Activated T-helper 1 cell treated with anti-CD3 and anti-CD28 coated beads, Interleukin-12 subunit alpha, Interleukin-12 subunit beta, Interleukin-2, Interleukin-4 antibody, amounts not matched to agents 30 ng/mL and 10 ng/mL and 1 ng/mL, durations not matched to agents 14 hours and 24 hours and 36 hours (primary cell): ENCODE measurements at regions of chr16 and their contacts with region 1.

Region 1: DNA sequence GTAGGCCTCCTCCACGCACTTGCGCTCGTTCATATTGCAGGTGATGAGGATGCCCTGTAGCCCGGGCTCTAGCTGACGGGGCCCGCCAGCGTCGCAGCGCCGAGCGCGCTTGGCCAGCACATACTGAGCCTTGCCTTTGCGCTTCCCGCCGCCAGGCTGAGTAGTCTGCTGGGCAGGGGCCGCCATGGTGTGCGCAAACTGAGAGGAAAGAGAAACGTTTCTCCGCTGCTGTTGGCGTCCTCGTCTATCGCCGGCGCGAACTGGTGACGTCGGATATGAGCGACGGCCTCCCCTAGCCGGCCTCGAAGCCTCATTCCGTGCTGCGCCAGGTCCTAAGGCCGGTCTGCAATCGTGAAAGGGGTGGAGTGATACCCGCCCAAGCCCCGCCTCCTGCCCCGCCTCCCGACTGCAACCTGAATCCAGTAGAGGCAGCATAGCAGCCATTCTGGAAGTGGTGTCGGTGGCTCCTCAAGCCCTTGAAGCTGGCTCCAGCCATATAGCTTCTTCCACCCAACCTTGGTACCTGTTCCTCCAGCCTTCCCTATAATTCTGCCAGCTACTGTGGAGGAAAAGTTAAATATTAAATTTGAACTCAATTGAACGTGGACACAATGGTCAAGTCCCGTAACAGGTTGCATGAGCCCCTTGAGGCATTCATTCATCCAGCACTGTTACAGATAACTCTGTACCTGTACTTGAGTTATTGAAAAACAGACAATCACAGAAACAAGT is at the start of gene THUMPD1:
- DNase-seq: peak; percentile 90
- H3K4me3 Mint-ChIP-seq: peak within 1 kb of the TSS; percentile 97
- H3K27ac Mint-ChIP-seq: peak within 1 kb of the TSS; percentile 95
- H3K4me1 Mint-ChIP-seq: peaks cover 11% of the 10 kb centered on the region
- H3K27me3 Mint-ChIP-seq: no peaks in the 10 kb centered on the region
- total RNA-seq, gene THUMPD1: 42.4 and 43.3 TPM in 2 replicates

Region 2: GRCh38 chr16:20763461-20764232 is 21.9 kb after region 1 on chr16 and contains the start of gene ACSM3:
- intact Hi-C with region 1: loop called (anchors 1 kb)
- DNase-seq: peak; percentile 64
- H3K4me3 Mint-ChIP-seq: peak within 1 kb of the TSS; percentile 84
- H3K27ac Mint-ChIP-seq: peak within 1 kb of the TSS; percentile 61
- H3K4me1 Mint-ChIP-seq: peaks cover 16% of the 10 kb centered on the region
- H3K27me3 Mint-ChIP-seq: peaks cover 3% of the 10 kb centered on the region
- total RNA-seq, gene ACSM3: 1.9 and 2.9 TPM in 2 replicates

Region 3: DNA sequence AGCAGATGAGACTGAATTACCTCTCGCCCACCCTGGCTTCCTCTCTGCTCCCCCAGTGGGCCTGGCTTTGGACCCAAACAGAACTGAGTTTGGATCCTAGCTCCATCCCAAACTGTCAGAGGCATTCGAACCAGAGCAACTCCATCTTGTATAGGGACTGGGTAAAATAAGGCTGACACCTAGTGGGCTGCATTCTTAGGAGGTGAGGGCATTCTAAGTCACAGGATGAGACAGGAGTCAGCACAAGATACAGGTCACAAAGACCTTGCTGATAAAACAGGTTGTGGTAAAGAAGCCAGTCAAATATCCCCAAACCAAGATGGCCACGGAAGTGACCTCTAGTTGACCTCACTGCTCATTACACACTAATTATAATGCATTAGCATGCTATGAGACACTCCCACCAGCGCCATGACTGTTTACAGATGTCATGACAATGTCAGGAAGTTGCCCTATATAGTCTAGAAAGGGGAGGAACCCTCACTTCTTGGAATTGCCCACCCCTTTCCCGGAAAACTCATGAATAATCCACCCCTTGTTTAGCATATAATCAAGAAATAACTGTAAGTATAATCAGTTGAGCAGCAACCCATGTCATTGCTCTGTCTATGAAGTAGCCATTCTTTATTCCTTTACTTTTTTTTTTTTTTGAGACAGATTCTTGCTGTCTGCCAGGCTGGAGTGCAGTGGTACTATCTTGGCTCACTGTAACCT is 203.3 kb after region 1 on chr16:
- intact Hi-C with region 1: loop called (anchors 1 kb)
- DNase-seq: peak; percentile 57
- H3K4me3 Mint-ChIP-seq: no peak overlapping the region
- H3K27ac Mint-ChIP-seq: peak overlapping the region; percentile 71
- H3K4me1 Mint-ChIP-seq: peaks cover 50% of the 10 kb centered on the region
- H3K27me3 Mint-ChIP-seq: no peaks in the 10 kb centered on the region

Region 4: GRCh38 chr16:21158208-21159110 is 416.7 kb after region 1 on chr16 and contains the start of gene LDAF1:
- intact Hi-C with region 1: loop called (anchors 1 kb)
- DNase-seq: peak; percentile 75
- H3K4me3 Mint-ChIP-seq: peak within 1 kb of the TSS; percentile 92
- H3K27ac Mint-ChIP-seq: peak within 1 kb of the TSS; percentile 11
- H3K4me1 Mint-ChIP-seq: peaks cover 8% of the 10 kb centered on the region
- H3K27me3 Mint-ChIP-seq: no peaks in the 10 kb centered on the region
- total RNA-seq, gene LDAF1: 6.5 and 6.6 TPM in 2 replicates